Naive thymus-derived CD4-positive, alpha-beta T cell (primary cell): ENCODE measurements at regions of chr9 and their contacts with region 1.

Region 1: DNA sequence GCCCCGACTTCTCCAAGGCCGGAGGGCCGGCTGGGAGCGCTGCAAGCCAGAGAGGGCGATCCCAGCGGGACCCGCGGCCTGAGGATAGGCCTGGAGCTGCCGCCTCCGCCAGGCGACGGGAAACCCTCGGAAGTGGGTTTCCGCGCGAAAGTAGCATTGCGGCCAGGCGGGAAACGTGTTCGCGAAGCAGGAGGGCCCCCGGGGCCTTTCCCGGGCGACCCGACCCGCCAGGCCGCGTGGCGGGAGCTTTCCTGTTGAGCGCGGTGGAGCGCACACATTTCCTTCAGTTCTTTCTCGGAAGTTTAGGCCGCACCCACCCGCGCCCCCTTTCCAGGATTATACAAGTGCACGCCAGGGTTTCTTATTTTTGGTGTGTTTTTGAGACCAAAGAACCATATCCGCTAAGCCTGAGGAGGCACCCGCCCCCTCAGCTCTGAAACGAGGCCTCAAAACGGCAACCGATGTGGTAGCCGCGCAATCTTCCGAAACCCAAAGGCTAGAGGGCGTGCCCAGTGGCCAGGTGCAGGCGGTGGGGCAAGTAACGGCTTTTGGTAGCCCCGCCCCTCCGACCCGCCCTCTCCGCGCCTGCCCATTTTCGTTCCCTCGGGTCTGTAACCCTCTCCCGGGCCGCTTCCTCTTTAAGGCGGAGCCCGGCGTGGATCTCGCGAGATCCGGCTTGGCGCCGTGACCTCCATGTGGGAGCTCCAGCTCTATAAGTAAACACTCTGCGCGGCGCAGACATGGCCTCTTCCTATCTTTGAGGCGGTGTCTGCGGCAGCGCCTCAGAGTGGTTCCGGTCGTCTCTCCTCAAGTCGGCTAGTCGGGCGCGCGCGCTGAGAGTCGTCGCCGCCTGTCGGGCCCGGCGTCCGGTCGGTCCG is at the start of gene UHRF2:
- DNase-seq: peak; percentile 88 to 99 (median 97)
- ATAC-seq: peak; percentile 93
- H3K4me3 ChIP-seq: peak within 1 kb of the TSS; percentile 67
- H3K4me3 Mint-ChIP-seq: peak within 1 kb of the TSS; percentile 80 to 98 (median 92)
- H3K27ac ChIP-seq: peak within 1 kb of the TSS; percentile 86
- H3K27ac Mint-ChIP-seq: peak within 1 kb of the TSS; percentile 87 to 98 (median 95)
- H3K4me1 ChIP-seq: peaks cover 20 to 26% of the 10 kb centered on the region in 2 donors
- H3K4me1 Mint-ChIP-seq: peaks cover 23 to 41% (median 35%) of the 10 kb centered on the region in 7 donors
- H3K27me3 ChIP-seq: no peaks in the 10 kb centered on the region
- H3K27me3 Mint-ChIP-seq: peaks cover 0 to 9% (median 0%) of the 10 kb centered on the region in 5 donors
- total RNA-seq, gene UHRF2: 78.7 to 117 (median 111) TPM

Region 2: DNA sequence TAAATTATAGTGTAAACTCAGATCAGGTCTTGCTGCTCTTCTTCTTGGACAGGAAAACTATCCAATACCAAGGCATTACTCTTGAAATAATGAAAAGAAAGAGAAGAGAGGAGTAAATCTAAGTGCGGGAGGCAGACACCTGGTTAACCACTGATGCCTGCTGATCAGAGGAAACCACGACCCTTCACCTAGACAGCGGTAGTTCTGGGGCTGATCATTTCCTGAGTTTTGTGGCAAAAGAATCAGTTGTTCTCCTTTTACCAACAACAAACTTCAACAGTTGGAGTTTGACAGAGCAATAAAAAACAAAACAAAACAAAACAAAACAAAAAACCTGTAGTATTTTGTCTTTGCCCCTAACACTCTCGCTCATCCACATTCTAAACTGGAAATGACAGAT is 1076.0 kb before region 1 on chr9:
- CTCF ChIA-PET with region 1: no interaction called
- POLR2A ChIA-PET with region 1: no interaction called
- intact Hi-C with region 1: loop called in 1 of 2 experiments (anchors 5 kb)
- DNase-seq: peak in 7 of 9 donors; percentile 47 to 70 (median 60)
- ATAC-seq: peak; percentile 62
- H3K4me3 ChIP-seq: peak overlapping the region; percentile 27
- H3K4me3 Mint-ChIP-seq: peak overlapping the region; percentile 64 to 87 (median 80)
- H3K27ac ChIP-seq: peak overlapping the region; percentile 64
- H3K27ac Mint-ChIP-seq: peak overlapping the region; percentile 79 to 95 (median 91)
- H3K4me1 ChIP-seq: peaks cover 24 to 28% of the 10 kb centered on the region in 2 donors
- H3K4me1 Mint-ChIP-seq: peaks cover 20 to 64% (median 50%) of the 10 kb centered on the region in 7 donors
- H3K27me3 ChIP-seq: no peaks in the 10 kb centered on the region
- H3K27me3 Mint-ChIP-seq: no peaks in the 10 kb centered on the region

Region 3: DNA sequence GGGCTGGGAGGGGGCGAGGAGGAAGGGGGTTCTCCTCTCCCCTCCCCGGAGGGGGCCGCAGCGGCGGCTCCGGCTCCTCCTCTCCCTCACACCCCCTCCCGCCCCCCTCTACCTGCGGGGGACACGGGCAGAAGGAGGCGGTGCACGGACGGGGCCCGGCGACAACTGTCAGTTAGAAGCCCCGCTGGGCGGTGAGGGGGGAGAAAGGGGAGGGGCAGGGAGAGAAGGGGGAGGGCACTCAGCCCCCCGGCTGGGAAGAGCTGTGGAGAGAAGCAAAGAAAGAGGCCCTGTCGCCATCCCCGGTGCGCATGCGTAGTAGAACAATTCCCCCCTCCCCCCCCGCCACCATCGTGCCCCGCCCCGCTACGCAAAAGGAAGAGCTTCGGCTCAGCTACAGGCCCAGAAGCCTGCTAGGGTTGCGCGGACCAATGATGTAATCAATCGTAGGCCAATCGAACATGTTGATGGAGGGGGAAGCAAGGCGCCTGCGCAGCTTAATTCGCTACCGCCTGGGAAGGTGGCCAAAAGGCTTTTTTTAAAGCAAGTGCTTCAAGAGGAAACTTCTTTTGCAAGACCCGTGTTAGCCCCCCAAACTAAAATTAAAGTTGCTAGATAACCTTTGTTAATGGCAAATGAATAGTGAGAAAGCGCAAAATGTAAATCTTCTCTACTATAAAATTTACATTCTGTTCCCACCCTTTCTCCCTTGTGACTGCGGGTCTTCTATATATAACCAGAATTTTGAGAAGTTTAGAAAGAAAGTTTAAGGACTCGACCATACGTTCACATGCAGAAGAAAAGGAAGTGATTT is 404.4 kb before region 1 on chr9:
- CTCF ChIA-PET with region 1: no interaction called
- POLR2A ChIA-PET with region 1: interaction called, 7 read pairs
- intact Hi-C with region 1: loop called (anchors 1 kb)
- DNase-seq: peak; percentile 79 to 98 (median 93)
- ATAC-seq: peak; percentile 84
- H3K4me3 ChIP-seq: peak overlapping the region; percentile 75
- H3K4me3 Mint-ChIP-seq: peak overlapping the region; percentile 74 to 99 (median 94)
- H3K27ac ChIP-seq: peak overlapping the region; percentile 97
- H3K27ac Mint-ChIP-seq: peak overlapping the region; percentile 83 to 97 (median 91)
- H3K4me1 ChIP-seq: peaks cover 20 to 36% of the 10 kb centered on the region in 2 donors
- H3K4me1 Mint-ChIP-seq: peaks cover 26 to 75% (median 65%) of the 10 kb centered on the region in 7 donors
- H3K27me3 ChIP-seq: no peaks in the 10 kb centered on the region
- H3K27me3 Mint-ChIP-seq: no peaks in the 10 kb centered on the region

Region 4: GRCh38 chr9:6272229-6272598 is 140.5 kb before region 1 on chr9:
- CTCF ChIA-PET with region 1: no interaction called
- POLR2A ChIA-PET with region 1: no interaction called
- intact Hi-C with region 1: no loop called
- DNase-seq: no peak
- ATAC-seq: no peak
- H3K4me3 ChIP-seq: no peak overlapping the region
- H3K4me3 Mint-ChIP-seq: no peak overlapping the region
- H3K27ac ChIP-seq: no peak overlapping the region
- H3K27ac Mint-ChIP-seq: no peak overlapping the region
- H3K4me1 ChIP-seq: no peaks in the 10 kb centered on the region
- H3K4me1 Mint-ChIP-seq: no peaks in the 10 kb centered on the region
- H3K27me3 ChIP-seq: no peaks in the 10 kb centered on the region
- H3K27me3 Mint-ChIP-seq: peaks cover 0 to 18% (median 6%) of the 10 kb centered on the region in 5 donors

Region 5: GRCh38 chr9:6449645-6450044 is 36.9 kb after region 1 on chr9:
- CTCF ChIA-PET with region 1: interaction called, 3 read pairs
- POLR2A ChIA-PET with region 1: interaction called, 9 read pairs
- intact Hi-C with region 1: loop called in 1 of 2 experiments (anchors 5 kb)
- DNase-seq: no peak
- ATAC-seq: no peak
- H3K4me3 ChIP-seq: no peak overlapping the region
- H3K4me3 Mint-ChIP-seq: peak overlapping the region in 8 of 10 donors; percentile 8 to 55 (median 28)
- H3K27ac ChIP-seq: no peak overlapping the region
- H3K27ac Mint-ChIP-seq: peak overlapping the region in 3 of 9 donors; percentile 23 to 71 (median 38)
- H3K4me1 ChIP-seq: peaks cover 11 to 25% of the 10 kb centered on the region in 2 donors
- H3K4me1 Mint-ChIP-seq: peaks cover 46 to 78% (median 67%) of the 10 kb centered on the region in 7 donors
- H3K27me3 ChIP-seq: no peaks in the 10 kb centered on the region
- H3K27me3 Mint-ChIP-seq: no peaks in the 10 kb centered on the region

Region 6: DNA sequence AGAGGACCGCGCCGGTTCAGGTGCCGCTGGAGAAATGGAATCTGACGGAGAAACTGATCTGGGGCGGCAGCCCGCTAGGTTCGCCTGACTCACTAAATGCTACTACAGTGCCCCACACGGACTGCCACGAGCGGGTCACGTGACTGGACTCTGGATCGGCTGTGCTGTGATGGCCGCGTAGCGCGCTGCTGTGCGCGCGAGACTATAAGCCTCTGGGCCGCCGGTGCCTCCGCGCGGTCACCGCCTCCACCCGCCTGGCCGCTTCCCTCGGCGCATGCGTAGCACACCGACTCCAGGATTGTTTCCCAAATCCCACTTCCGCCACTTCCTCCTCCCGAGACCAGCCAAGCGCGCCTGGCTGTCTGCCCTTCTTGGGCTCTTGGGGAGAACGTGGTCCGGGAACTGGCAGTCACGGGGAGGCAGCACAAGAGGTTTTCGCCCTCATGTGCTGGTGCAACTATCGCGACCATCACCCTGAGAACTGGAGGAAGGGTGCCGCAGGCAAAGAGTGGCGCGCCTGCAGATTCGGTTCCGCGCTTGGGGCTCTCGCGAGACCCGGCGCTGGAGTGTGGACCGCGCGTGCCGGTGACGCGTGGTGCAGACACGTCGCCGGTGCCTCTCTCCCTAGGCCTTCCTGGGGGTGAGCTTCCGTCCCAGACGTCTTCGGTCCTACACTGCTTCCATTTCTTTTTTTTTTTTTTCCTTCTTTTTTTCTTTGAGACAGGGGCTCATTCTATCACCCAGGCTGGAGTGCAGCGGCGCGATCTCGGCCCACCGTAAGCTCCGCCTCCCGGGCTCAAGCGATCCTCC is 268.6 kb after region 1 on chr9:
- CTCF ChIA-PET with region 1: no interaction called
- POLR2A ChIA-PET with region 1: interaction called, 24 read pairs
- intact Hi-C with region 1: loop called (anchors 1 kb)
- DNase-seq: peak; percentile 71 to 95 (median 90)
- ATAC-seq: peak; percentile 90
- H3K4me3 ChIP-seq: peak overlapping the region; percentile 89
- H3K4me3 Mint-ChIP-seq: peak overlapping the region; percentile 88 to 98 (median 95)
- H3K27ac ChIP-seq: peak overlapping the region; percentile 91
- H3K27ac Mint-ChIP-seq: peak overlapping the region; percentile 97 to 100 (median 99)
- H3K4me1 ChIP-seq: peaks cover 0 to 6% of the 10 kb centered on the region in 2 donors
- H3K4me1 Mint-ChIP-seq: peaks cover 7 to 31% (median 20%) of the 10 kb centered on the region in 7 donors
- H3K27me3 ChIP-seq: no peaks in the 10 kb centered on the region
- H3K27me3 Mint-ChIP-seq: no peaks in the 10 kb centered on the region

Region 7: GRCh38 chr9:7976167-7976755 is 1563.5 kb after region 1 on chr9:
- CTCF ChIA-PET with region 1: no interaction called
- POLR2A ChIA-PET with region 1: no interaction called
- intact Hi-C with region 1: loop called in 1 of 2 experiments (anchors 10 kb)
- DNase-seq: peak in 8 of 9 donors; percentile 46 to 89 (median 82)
- ATAC-seq: peak; percentile 97
- H3K4me3 ChIP-seq: no peak overlapping the region
- H3K4me3 Mint-ChIP-seq: peak overlapping the region; percentile 16 to 80 (median 71)
- H3K27ac ChIP-seq: peak overlapping the region; percentile 14
- H3K27ac Mint-ChIP-seq: peak overlapping the region; percentile 76 to 97 (median 87)
- H3K4me1 ChIP-seq: peaks cover 41 to 60% of the 10 kb centered on the region in 2 donors
- H3K4me1 Mint-ChIP-seq: peaks cover 44 to 82% (median 72%) of the 10 kb centered on the region in 7 donors
- H3K27me3 ChIP-seq: no peaks in the 10 kb centered on the region
- H3K27me3 Mint-ChIP-seq: no peaks in the 10 kb centered on the region